GM12878 (cell line): ENCODE measurements at regions of chr15 and their contacts with region 1.

Region 1: DNA sequence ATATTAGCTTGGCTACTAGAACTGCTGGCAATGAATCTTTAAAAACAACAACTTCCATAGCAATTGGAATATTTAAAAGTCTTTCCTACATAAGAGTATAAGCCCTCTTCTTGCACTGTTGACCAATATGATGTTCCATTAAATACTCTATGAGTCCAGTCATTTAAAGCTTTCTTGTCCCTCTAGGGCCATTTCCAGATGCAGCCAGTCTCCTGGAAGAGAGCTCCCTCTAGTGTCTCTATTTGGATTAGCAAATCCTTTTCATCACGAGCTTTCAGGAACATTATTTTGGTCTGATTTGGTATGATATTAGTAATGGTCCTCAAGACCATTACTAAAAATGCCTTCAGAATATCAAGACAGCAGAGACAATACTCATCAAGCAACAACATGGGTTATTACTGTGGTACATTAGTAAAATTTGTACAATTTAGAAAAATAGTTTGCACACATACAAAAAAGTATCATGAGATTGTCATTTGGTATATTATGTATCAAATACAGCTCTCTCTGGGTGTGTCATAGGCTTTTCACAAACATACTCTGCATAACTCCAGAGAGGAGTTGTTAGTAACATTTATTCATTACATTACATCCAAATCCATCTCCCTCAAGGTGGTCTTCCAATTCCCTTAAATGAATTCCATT is 101.3 kb downstream of the DPH6 start:
- DNase-seq: peak; percentile 11
- ATAC-seq: peak; percentile 66
- H3K4me3 ChIP-seq: no peak overlapping the region
- H3K27ac ChIP-seq: no peak overlapping the region
- H3K4me1 ChIP-seq: no peaks in the 10 kb centered on the region
- H3K27me3 ChIP-seq: no peaks in the 10 kb centered on the region
- CTCF ChIP-seq: peak; percentile 71 to 85 (median 75)
- EP300 ChIP-seq: no peak
- POLR2A ChIP-seq: no peak
- RAD21 ChIP-seq: peak; percentile 94

Region 2: GRCh38 chr15:34708422-34708821 is 736.3 kb before region 1 on chr15:
- CTCF ChIA-PET with region 1: no interaction called
- POLR2A ChIA-PET with region 1: no interaction called
- RAD21 ChIA-PET with region 1: no interaction called
- SMC1A ChIA-PET with region 1: no interaction called
- in situ Hi-C with region 1: no loop called
- intact Hi-C with region 1: no loop called
- DNase-seq: no peak
- ATAC-seq: peak; percentile 81
- H3K4me3 ChIP-seq: no peak overlapping the region
- H3K27ac ChIP-seq: no peak overlapping the region
- H3K4me1 ChIP-seq: no peaks in the 10 kb centered on the region
- H3K27me3 ChIP-seq: no peaks in the 10 kb centered on the region; a peak in 1 of 4 replicates
- CTCF ChIP-seq: peak; percentile 66 to 75 (median 71)
- EP300 ChIP-seq: no peak
- POLR2A ChIP-seq: no peak
- RAD21 ChIP-seq: peak; percentile 53

Region 3: DNA sequence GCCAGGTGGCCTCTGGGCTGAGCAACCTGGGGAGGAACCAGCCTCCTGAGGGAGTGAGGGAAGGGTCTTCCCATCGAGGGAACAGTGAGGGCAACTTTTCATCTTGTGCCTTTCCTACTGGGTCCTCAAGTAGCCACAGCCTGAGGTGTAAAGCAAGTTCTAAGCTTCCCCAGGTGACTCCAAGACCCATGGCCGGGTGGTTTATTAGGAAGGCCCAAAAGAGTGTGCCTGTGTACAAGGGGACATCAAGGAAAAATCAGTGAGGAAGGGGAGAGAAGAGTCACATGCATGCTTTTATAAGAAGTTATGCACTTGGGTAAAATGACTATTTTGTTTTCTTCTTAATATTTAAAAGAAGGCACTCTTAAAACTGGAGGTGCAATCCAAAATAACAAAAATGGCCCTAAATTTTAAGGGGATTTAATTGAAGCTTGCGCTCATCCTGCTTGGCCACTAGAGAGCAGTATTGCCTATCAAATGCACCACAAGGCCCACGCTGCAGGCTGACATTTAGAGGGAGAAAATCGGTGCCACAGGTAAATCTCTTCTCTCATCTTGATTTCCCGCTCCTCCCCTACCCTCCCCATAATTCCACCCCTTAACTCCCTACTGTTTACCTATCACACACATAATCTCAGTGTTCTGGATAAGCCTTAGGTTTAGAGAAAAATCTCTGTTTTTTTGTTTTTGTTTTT is 366.3 kb before region 1 on chr15:
- CTCF ChIA-PET with region 1: interaction called, 185 read pairs
- POLR2A ChIA-PET with region 1: interaction called, 3 read pairs
- RAD21 ChIA-PET with region 1: interaction called, 55 read pairs
- SMC1A ChIA-PET with region 1: interaction called, 85 read pairs
- in situ Hi-C with region 1: loop called (anchors 5 kb)
- intact Hi-C with region 1: loop called (anchors 1 kb)
- DNase-seq: no peak
- ATAC-seq: peak; percentile 75
- H3K4me3 ChIP-seq: no peak overlapping the region
- H3K27ac ChIP-seq: no peak overlapping the region
- H3K4me1 ChIP-seq: no peaks in the 10 kb centered on the region
- H3K27me3 ChIP-seq: no peaks in the 10 kb centered on the region
- CTCF ChIP-seq: peak; percentile 78 to 89 (median 82)
- EP300 ChIP-seq: no peak
- POLR2A ChIP-seq: no peak
- RAD21 ChIP-seq: peak; percentile 98

Region 4: GRCh38 chr15:35181538-35181937 is 263.1 kb before region 1 on chr15:
- CTCF ChIA-PET with region 1: interaction called, 10 read pairs
- POLR2A ChIA-PET with region 1: no interaction called
- RAD21 ChIA-PET with region 1: interaction called, 3 read pairs
- SMC1A ChIA-PET with region 1: no interaction called
- in situ Hi-C with region 1: no loop called
- intact Hi-C with region 1: no loop called
- DNase-seq: peak; percentile 21
- ATAC-seq: peak; percentile 81
- H3K4me3 ChIP-seq: no peak overlapping the region
- H3K27ac ChIP-seq: no peak overlapping the region
- H3K4me1 ChIP-seq: peaks cover 3% of the 10 kb centered on the region; the same call in 1 of the 2 replicates
- H3K27me3 ChIP-seq: no peaks in the 10 kb centered on the region
- CTCF ChIP-seq: no peak
- EP300 ChIP-seq: no peak
- POLR2A ChIP-seq: no peak
- RAD21 ChIP-seq: no peak

Region 5: GRCh38 chr15:35427091-35427490 is 17.6 kb before region 1 on chr15:
- CTCF ChIA-PET with region 1: interaction called, 35 read pairs
- POLR2A ChIA-PET with region 1: no interaction called
- RAD21 ChIA-PET with region 1: interaction called, 7 read pairs
- SMC1A ChIA-PET with region 1: interaction called, 24 read pairs
- in situ Hi-C with region 1: no loop called
- intact Hi-C with region 1: no loop called
- DNase-seq: no peak
- ATAC-seq: no peak
- H3K4me3 ChIP-seq: no peak overlapping the region
- H3K27ac ChIP-seq: no peak overlapping the region
- H3K4me1 ChIP-seq: no peaks in the 10 kb centered on the region
- H3K27me3 ChIP-seq: no peaks in the 10 kb centered on the region
- CTCF ChIP-seq: no peak
- EP300 ChIP-seq: no peak
- POLR2A ChIP-seq: no peak
- RAD21 ChIP-seq: no peak

Region 6: GRCh38 chr15:35479423-35479822 is 34.7 kb after region 1 on chr15:
- CTCF ChIA-PET with region 1: interaction called, 15 read pairs
- POLR2A ChIA-PET with region 1: no interaction called
- RAD21 ChIA-PET with region 1: interaction called, 4 read pairs
- SMC1A ChIA-PET with region 1: interaction called, 8 read pairs
- in situ Hi-C with region 1: no loop called
- intact Hi-C with region 1: no loop called
- DNase-seq: no peak
- ATAC-seq: no peak; the same call in 2 of the 3 replicates
- H3K4me3 ChIP-seq: no peak overlapping the region
- H3K27ac ChIP-seq: no peak overlapping the region
- H3K4me1 ChIP-seq: no peaks in the 10 kb centered on the region
- H3K27me3 ChIP-seq: no peaks in the 10 kb centered on the region
- CTCF ChIP-seq: no peak
- EP300 ChIP-seq: no peak
- POLR2A ChIP-seq: no peak
- RAD21 ChIP-seq: no peak